Activated T-helper 1 cell treated with anti-CD3 and anti-CD28 coated beads, Interleukin-12 subunit alpha, Interleukin-12 subunit beta, Interleukin-2, Interleukin-4 antibody, amounts not matched to agents 30 ng/mL and 10 ng/mL and 1 ng/mL, durations not matched to agents 14 hours and 24 hours and 36 hours (primary cell): ENCODE measurements at regions of chr3 and their contacts with region 1.

Region 1: GRCh38 chr3:109241459-109242186 is 74.7 kb downstream of the DPPA2 start:
- DNase-seq: no peak
- H3K4me3 Mint-ChIP-seq: no peak overlapping the region
- H3K27ac Mint-ChIP-seq: no peak overlapping the region
- H3K4me1 Mint-ChIP-seq: no peaks in the 10 kb centered on the region
- H3K27me3 Mint-ChIP-seq: no peaks in the 10 kb centered on the region

Region 2: DNA sequence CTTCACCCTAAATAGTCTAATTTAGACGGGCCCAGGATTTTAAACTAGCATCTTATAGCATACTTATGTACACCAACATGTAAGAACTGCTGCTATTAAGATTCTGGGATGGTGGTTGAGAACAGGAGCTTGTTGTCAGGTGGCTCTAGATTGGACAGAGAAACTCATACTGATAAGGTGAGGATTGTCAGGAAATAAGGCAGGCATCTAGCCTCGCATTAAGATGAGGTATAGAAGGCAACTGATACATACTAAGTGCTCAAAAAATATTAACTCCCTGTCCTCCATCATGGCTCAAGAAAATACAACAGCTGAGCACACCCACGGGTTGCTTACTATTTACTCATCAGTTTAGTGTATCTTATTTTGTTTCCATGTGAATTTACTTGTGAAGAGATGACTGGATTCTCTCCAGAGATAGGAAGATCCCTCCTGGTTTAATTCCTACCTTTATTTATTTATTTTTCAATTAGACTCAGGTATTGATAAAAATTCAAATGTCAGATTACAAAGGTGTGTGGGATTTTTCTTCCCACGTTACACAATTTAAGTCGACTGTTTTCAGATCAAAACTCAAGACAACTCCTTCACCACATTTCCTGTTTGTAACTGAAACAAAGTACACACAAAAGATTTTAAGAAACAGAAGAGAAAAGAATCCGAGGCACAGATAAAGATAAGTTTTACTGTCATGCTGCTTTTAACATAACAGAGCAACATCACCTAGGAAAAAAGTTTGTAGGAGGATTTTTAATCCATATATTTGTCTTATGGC is 419.3 kb before region 1 on chr3 and contains the start of gene TRAT1:
- intact Hi-C with region 1: no loop called
- DNase-seq: no peak
- H3K4me3 Mint-ChIP-seq: peak within 1 kb of the TSS; percentile 87
- H3K27ac Mint-ChIP-seq: peak within 1 kb of the TSS; percentile 92
- H3K4me1 Mint-ChIP-seq: peaks cover 73% of the 10 kb centered on the region
- H3K27me3 Mint-ChIP-seq: no peaks in the 10 kb centered on the region
- total RNA-seq, gene TRAT1: 94.6 and 99.4 TPM in 2 replicates

Region 3: DNA sequence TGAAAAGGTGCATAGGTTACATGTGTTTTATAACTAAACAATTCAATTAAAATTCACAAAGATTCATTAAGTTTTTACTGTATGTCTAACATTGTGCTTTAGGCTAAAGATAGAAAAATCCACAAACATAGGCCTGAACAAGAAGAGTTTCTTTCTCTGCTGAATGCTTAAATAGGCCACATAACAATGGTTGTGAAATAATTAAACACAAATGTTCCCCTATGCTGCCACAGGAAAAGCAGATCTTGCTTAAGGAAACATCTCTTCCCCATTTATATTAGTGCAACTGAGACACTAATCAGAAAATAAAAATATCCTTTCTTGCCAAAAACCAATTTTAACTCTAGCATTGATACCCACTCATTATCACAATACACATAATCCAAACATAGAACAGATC is 821.1 kb after region 1 on chr3:
- intact Hi-C with region 1: loop called (anchors 5 kb)
- DNase-seq: no peak
- H3K4me3 Mint-ChIP-seq: no peak overlapping the region
- H3K27ac Mint-ChIP-seq: no peak overlapping the region
- H3K4me1 Mint-ChIP-seq: no peaks in the 10 kb centered on the region
- H3K27me3 Mint-ChIP-seq: no peaks in the 10 kb centered on the region